Dendritic cell treated with granulocyte-macrophage colony-stimulating factor and Interleukin-4, amounts not matched to agents 40 ng/mL and 50 ng/mL, for 4 days (primary cell): ENCODE measurements at regions of chr12 and their contacts with region 1.

Region 1: DNA sequence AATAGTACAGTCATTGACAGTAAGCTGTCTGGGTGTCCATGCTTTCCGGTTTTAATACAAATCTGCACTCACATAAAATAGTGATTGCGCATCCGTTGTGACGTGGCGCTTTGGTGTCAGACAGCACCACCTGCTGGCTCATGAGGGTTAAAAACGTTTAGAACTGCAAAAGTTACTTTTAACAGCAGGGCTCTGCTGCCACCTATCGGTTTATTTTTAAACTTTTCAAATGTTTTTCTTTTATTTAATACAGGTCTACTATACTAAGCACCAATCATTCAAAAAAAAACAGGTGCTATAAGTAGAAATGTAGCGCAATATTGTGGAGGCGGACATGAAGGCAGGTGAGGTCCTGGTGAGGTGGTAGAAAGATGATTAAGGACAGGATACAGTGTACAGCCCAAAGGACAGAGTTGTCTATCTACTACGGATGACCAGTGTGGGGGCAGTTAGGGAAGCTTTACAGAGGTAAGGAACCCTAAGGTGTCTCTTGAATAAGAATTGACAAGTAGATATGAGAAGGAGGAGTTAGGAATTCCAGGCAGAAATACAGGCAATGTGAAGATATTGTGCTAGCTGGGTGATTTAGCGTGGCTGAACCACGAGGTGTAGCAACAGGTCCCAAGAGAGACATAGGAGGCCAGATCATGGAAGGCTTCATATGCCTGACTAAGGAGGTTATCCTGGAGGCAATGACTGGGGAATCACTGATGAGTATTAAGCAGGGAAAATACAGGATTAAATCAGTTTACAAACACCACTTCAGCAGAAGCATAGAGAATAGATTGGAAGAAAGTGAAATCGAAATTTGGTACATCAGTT is 91.5 kb upstream of the PRB2 start:
- H3K4me3 Mint-ChIP-seq: no peak overlapping the region
- H3K27ac Mint-ChIP-seq: no peak overlapping the region
- H3K4me1 Mint-ChIP-seq: no peaks in the 10 kb centered on the region
- H3K27me3 Mint-ChIP-seq: peaks cover 3% of the 10 kb centered on the region

Region 2: DNA sequence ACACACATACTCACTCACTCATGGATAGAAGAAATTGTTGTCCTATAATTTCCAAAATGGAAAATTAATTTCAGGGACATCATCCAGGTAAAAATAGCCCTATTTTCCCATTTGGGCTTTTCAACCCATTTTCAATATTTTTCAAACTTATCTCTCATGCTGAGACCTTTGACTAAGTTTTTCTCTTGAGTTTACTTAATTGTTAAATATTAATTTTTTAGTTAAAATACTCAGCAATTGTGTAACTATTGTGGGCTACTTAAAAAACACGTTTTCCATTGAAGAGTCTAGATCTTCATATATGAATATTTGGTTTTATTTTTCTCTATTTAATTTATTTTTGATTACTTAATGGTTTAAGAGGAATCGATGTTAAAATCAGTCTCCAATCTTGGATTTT is 380.5 kb before region 1 on chr12:
- intact Hi-C with region 1: no loop called
- H3K4me3 Mint-ChIP-seq: no peak overlapping the region
- H3K27ac Mint-ChIP-seq: no peak overlapping the region
- H3K4me1 Mint-ChIP-seq: peaks cover 22% of the 10 kb centered on the region
- H3K27me3 Mint-ChIP-seq: no peaks in the 10 kb centered on the region

Region 3: GRCh38 chr12:11171145-11171968 is 315.5 kb before region 1 on chr12 and contains the start of gene SMIM10L1:
- intact Hi-C with region 1: loop called (anchors 1 kb)
- H3K4me3 Mint-ChIP-seq: peak within 1 kb of the TSS; percentile 99
- H3K27ac Mint-ChIP-seq: peak within 1 kb of the TSS; percentile 100
- H3K4me1 Mint-ChIP-seq: peaks cover 46% of the 10 kb centered on the region
- H3K27me3 Mint-ChIP-seq: no peaks in the 10 kb centered on the region

Region 4: GRCh38 chr12:11228296-11228879 is 258.4 kb before region 1 on chr12:
- intact Hi-C with region 1: loop called (anchors 1 kb)
- H3K4me3 Mint-ChIP-seq: no peak overlapping the region
- H3K27ac Mint-ChIP-seq: no peak overlapping the region
- H3K4me1 Mint-ChIP-seq: no peaks in the 10 kb centered on the region
- H3K27me3 Mint-ChIP-seq: no peaks in the 10 kb centered on the region

Region 5: GRCh38 chr12:11408096-11408495 is 78.7 kb before region 1 on chr12:
- intact Hi-C with region 1: no loop called
- H3K4me3 Mint-ChIP-seq: no peak overlapping the region
- H3K27ac Mint-ChIP-seq: no peak overlapping the region
- H3K4me1 Mint-ChIP-seq: no peaks in the 10 kb centered on the region
- H3K27me3 Mint-ChIP-seq: no peaks in the 10 kb centered on the region